Transverse colon (tissue), 4 donors: ENCODE measurements at regions of chr6 and their contacts with region 1.

Region 1: DNA sequence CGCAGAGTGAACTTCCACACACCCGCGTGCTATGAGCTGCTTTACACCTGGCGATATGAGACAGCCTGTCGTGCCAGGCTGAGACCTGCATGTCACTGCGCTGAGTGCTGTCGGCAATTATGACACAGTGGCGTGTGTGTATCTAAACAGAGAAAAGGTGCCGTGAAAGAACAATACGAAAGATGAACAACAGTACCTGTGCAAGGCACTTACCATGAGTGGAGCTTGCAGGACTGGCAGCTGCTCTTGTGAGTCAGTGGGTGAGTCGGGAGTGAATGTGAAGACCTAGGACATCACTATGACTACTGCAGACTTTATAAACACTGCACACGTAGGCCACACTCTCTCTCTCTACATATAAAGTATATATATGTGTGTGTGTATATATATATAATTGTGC is 68.5 kb upstream of the DUSP22 start:
- DNase-seq: no peak
- H3K4me3 ChIP-seq: no peak overlapping the region
- H3K27ac ChIP-seq: no peak overlapping the region
- H3K4me1 ChIP-seq: no peaks in the 10 kb centered on the region
- H3K27me3 ChIP-seq: peaks cover 6% of the 10 kb centered on the region
- CTCF ChIP-seq: no peak
- EP300 ChIP-seq: no peak
- POLR2A ChIP-seq: no peak

Region 2: GRCh38 chr6:273551-274058 is 49.8 kb after region 1 on chr6:
- in situ Hi-C with region 1: no loop called
- intact Hi-C with region 1: no loop called
- DNase-seq: no peak
- H3K4me3 ChIP-seq: no peak overlapping the region
- H3K27ac ChIP-seq: no peak overlapping the region
- H3K4me1 ChIP-seq: no peaks in the 10 kb centered on the region
- H3K27me3 ChIP-seq: no peaks in the 10 kb centered on the region
- CTCF ChIP-seq: no peak
- EP300 ChIP-seq: no peak
- POLR2A ChIP-seq: no peak

Region 3: DNA sequence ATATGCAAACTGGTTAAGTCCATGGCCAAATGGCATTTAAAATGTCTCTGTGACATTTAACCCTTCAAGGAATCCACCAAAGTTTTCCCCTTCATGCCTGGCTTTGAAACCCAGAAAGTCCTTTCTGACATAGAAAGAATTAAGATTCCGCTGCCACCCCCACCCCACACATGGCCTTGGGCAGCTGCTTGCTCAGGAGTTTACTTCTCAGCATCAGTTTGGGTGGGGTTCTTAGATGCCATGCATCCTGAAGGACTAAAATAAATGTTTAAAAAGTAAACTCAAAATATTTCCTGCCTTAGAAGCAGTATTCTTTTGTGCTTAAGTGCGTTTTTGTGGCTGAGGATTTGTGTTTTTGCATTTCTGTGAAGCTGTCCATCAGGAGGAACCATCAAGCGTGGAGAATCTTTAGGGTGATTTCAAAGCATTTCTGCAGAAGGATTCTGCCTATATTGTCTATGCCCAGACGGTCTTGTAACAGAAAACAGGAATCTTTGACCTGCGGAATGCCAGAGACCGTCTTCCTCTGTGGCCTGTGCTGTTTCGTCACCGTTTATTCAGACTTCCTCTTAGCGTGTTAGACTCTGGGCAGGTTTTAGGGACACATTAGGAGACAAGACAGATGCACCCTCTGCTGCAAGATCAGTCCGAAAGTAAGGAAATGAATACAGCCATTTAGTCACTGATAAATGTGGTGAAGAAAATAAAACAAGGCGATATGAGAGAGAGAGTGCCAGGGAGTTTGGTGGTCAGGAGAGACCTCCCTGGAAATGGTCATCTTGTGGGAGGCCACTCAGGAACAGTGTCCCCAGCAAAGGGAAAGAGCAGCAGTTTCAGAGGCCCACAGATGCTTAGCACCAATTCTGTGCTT is 74.7 kb after region 1 on chr6:
- in situ Hi-C with region 1: no loop called
- intact Hi-C with region 1: loop called (anchors 2 kb)
- DNase-seq: no peak
- H3K4me3 ChIP-seq: no peak overlapping the region
- H3K27ac ChIP-seq: peak overlapping the region in 3 of 4 donors; percentile 9 to 98 (median 18)
- H3K4me1 ChIP-seq: peaks cover 7 to 40% (median 13%) of the 10 kb centered on the region in 4 donors
- H3K27me3 ChIP-seq: no peaks in the 10 kb centered on the region
- CTCF ChIP-seq: no peak
- EP300 ChIP-seq: no peak
- POLR2A ChIP-seq: no peak

Region 4: DNA sequence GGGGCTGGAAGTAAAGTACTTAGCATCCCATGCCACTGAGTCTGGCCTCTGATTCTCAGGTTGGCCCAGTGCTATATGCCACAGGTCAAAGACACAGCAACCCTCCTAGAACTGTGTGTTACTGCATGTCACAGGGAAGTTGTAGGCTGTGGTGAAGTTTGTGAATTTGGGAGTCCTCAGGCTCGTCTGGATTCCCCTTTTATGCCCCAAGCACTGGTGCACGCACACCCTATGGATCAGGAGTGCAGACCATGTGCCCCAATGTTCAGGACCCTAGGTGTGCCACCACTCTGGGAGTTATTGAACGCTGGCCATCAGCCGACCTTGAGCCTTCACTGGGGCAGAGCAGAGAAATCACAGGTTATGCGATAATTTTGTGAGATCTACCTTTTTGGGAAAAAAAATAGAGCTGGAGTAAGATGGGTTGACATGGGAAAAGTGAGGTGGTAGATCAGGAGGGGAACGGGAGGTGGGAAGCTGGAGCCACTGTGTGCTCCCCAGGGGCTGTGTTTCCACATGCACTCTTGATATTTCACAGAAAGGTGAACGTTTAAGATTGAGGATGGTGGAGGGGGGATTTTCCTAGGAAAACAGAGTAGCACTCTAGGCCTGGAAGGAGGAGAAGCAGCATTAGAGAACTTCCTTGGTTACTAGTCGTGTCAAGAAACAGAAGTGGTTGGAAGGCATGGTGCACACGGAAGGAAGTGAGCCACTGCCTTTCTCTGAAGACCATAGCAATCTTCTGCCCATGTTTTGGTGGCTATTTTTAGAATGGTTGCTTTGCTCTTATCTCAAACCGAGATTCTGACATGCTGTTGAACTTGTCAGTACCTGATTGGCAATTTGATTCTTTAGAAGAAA is 112.6 kb after region 1 on chr6:
- in situ Hi-C with region 1: no loop called
- intact Hi-C with region 1: no loop called
- DNase-seq: no peak
- H3K4me3 ChIP-seq: no peak overlapping the region
- H3K27ac ChIP-seq: peak overlapping the region in 2 of 4 donors; percentile 0 to 44
- H3K4me1 ChIP-seq: peaks cover 3 to 9% (median 5%) of the 10 kb centered on the region in 4 donors
- H3K27me3 ChIP-seq: no peaks in the 10 kb centered on the region
- CTCF ChIP-seq: no peak
- EP300 ChIP-seq: no peak
- POLR2A ChIP-seq: no peak